Heart left ventricle (tissue), 16 donors: ENCODE measurements at regions of chr12 and their contacts with region 1.

Region 1: DNA sequence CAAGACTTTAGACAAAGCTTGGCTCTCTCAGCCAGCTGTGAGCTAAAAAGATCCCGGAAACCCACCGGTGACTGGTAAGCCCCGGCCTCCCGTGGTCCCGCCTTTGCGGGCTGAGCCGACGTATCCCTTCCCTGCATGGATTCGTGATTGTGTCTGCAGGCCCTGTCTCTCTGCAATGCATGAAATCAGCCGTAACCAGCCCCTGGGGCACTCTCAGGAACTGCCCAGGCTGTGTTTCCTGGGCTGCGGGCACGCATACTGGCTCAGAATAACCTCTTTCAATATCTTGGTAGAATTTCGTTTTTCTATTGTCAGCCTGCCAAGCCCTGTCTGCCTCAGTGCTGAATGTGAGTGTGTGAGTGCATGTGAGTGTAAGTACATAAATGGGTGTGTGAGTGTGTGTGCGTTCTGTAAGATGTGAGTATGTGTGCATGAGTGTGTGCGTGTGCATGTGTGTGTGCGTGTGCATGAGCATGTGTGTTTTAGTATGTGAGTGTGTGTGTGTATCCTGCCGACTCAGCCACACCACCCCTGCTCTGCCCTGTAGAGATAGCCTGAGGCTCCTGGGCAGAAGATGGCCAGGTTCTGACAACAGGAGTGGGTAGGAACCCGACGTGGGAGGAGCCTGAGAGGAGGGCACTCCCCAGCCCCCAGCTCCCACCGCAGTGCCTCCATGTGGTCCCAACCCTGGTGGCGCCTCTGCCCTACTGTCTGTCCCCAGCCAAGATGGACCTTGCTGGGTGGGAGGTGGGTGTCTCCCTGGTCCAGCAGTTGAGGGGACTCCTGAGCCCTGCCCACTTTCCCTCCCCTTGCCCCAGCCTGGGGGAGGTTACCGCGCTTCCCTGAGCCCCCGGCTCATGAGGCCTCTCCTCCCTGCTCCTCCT is 268.8 kb downstream of the ADGRD1 start:
- DNase-seq: no peak
- ATAC-seq: peak in 1 of 4 donors; percentile 9
- H3K4me3 ChIP-seq: no peak overlapping the region
- H3K27ac ChIP-seq: no peak overlapping the region
- H3K4me1 ChIP-seq: peaks cover 0 to 6% (median 0%) of the 10 kb centered on the region in 12 donors
- H3K27me3 ChIP-seq: peaks cover 0 to 33% (median 18%) of the 10 kb centered on the region in 9 donors
- CTCF ChIP-seq: no peak
- POLR2A ChIP-seq: no peak

Region 2: GRCh38 chr12:131309700-131310099 is 87.2 kb after region 1 on chr12:
- intact Hi-C with region 1: no loop called
- DNase-seq: peak in 1 of 5 donors; percentile 28
- ATAC-seq: no peak
- H3K4me3 ChIP-seq: no peak overlapping the region
- H3K27ac ChIP-seq: no peak overlapping the region
- H3K4me1 ChIP-seq: no peaks in the 10 kb centered on the region
- H3K27me3 ChIP-seq: peaks cover 0 to 42% (median 0%) of the 10 kb centered on the region in 9 donors
- CTCF ChIP-seq: no peak
- POLR2A ChIP-seq: no peak

Region 3: DNA sequence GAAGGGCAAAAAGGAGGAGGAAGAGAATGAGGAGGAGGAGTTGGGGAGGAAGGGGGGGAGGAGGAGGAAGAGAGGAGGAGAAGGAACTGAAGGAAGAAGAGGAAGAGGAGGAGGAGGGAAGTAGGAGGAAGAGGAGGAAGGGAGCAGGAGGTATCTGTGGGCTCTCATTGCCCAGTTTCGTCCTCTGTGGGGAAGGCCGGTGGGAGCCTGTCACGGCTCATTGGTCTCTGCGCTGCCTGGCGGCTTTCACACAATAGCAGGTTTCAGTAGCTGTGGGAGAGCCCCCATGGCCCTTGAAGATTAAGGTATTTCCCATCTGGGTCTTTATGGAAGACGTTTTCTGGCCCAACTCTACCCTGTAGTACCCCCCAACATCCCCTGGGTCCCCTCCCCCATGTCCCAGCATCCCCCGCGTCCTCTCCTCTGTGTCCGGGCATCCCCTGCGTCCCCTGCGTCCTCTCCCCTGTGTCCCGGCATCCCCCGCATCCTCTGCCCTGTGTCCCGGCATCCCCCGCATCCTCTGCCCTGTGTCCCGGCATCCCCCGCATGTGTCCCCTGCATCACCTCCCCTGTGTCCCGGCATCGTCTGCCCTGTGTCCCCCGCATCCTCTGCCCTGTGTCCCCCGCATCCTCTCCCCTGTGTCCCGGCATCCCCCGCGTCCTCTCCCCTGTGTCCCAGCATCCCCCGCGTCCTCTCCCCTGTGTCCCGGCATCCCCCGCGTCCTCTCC is 210.2 kb after region 1 on chr12:
- intact Hi-C with region 1: loop called in 2 of 10 experiments (anchors 10 kb)
- DNase-seq: no peak
- ATAC-seq: no peak
- H3K4me3 ChIP-seq: no peak overlapping the region
- H3K27ac ChIP-seq: no peak overlapping the region
- H3K4me1 ChIP-seq: no peaks in the 10 kb centered on the region
- H3K27me3 ChIP-seq: peaks cover 0 to 42% (median 5%) of the 10 kb centered on the region in 9 donors
- CTCF ChIP-seq: no peak
- POLR2A ChIP-seq: no peak

Region 4: GRCh38 chr12:131684015-131684725 is 461.7 kb after region 1 on chr12:
- intact Hi-C with region 1: loop called in 1 of 10 experiments (anchors 10 kb)
- DNase-seq: no peak
- ATAC-seq: no peak
- H3K4me3 ChIP-seq: no peak overlapping the region
- H3K27ac ChIP-seq: no peak overlapping the region
- H3K4me1 ChIP-seq: no peaks in the 10 kb centered on the region
- H3K27me3 ChIP-seq: peaks cover 0 to 5% (median 0%) of the 10 kb centered on the region in 9 donors
- CTCF ChIP-seq: no peak
- POLR2A ChIP-seq: no peak